ENCODE measurements at regions of chr7 and their contacts with region 1.

Region 1: GRCh38 chr7:38398725-38399321 is 125.4 kb upstream of the TARP start:
- DNase-seq: peak in 1 of 2 experiments; percentile 59
- H3K4me3 ChIP-seq: no peak overlapping the region
- H3K27ac ChIP-seq: no peak overlapping the region
- H3K4me1 ChIP-seq: no peaks in the 10 kb centered on the region
- H3K27me3 ChIP-seq: no peaks in the 10 kb centered on the region
- CTCF ChIP-seq: peak; percentile 65 to 83 (median 77)
- EP300 ChIP-seq: no peak
- POLR2A ChIP-seq: no peak
- RAD21 ChIP-seq: peak; percentile 74 to 77

Region 2: GRCh38 chr7:38296059-38296857 is 102.6 kb before region 1 on chr7:
- CTCF ChIA-PET with region 1: no interaction called
- POLR2A ChIA-PET with region 1: no interaction called
- DNase-seq: no peak
- H3K4me3 ChIP-seq: no peak overlapping the region
- H3K27ac ChIP-seq: no peak overlapping the region
- H3K4me1 ChIP-seq: no peaks in the 10 kb centered on the region
- H3K27me3 ChIP-seq: no peaks in the 10 kb centered on the region
- CTCF ChIP-seq: no peak
- EP300 ChIP-seq: no peak
- POLR2A ChIP-seq: no peak
- RAD21 ChIP-seq: no peak

Region 3: DNA sequence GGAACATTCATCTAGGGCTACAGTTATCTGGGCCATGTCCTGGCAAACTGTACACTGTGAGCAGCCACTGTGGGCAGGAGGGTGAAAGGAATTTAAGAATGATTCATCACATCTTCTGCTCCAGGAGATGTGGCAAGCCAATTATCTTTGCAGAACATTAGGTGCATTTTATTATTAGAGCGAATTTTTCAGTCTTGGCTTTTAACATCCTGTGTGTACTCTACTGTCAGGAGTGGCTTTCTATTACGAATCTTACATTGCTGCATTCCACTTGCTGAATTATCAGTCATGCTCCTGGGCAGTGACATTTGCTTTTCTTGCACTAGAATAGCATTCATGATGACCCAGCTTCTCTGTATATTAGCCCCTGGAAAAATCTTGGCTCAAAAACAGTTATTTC is 16.1 kb before region 1 on chr7:
- CTCF ChIA-PET with region 1: interaction called, 13 read pairs
- POLR2A ChIA-PET with region 1: no interaction called
- DNase-seq: no peak
- H3K4me3 ChIP-seq: no peak overlapping the region
- H3K27ac ChIP-seq: no peak overlapping the region
- H3K4me1 ChIP-seq: no peaks in the 10 kb centered on the region
- H3K27me3 ChIP-seq: no peaks in the 10 kb centered on the region
- CTCF ChIP-seq: no peak
- EP300 ChIP-seq: no peak
- POLR2A ChIP-seq: no peak
- RAD21 ChIP-seq: no peak

Region 4: DNA sequence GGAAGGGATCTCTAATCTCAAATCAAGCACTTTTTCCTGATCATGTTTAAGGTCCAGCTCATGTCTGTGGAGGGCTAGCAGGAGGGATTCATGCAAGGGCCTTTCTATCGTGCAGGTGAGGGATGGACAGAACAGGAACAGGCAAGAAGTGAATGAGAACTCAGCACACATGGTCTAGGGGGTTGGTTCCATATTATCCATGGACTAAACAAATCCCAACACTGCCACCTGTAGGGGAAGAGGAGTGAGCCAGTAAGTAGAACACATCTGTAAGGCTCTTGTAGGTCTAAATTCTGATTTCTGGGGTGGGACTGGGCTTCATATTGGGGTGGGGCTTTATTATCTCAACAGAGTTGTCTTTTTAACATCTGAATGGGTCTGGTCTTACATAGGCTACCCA is 12.6 kb after region 1 on chr7:
- CTCF ChIA-PET with region 1: interaction called, 24 read pairs
- POLR2A ChIA-PET with region 1: interaction called, 4 read pairs
- DNase-seq: no peak
- H3K4me3 ChIP-seq: no peak overlapping the region
- H3K27ac ChIP-seq: no peak overlapping the region
- H3K4me1 ChIP-seq: peaks cover 0 to 2% (median 0%) of the 10 kb centered on the region in 4 experiments; a peak in 1 of 7 replicates
- H3K27me3 ChIP-seq: no peaks in the 10 kb centered on the region
- CTCF ChIP-seq: peak in 2 of 3 experiments; percentile 55 to 68; a peak in 2 of 4 replicates
- EP300 ChIP-seq: no peak
- POLR2A ChIP-seq: no peak
- RAD21 ChIP-seq: peak; percentile 29 to 35

Region 5: DNA sequence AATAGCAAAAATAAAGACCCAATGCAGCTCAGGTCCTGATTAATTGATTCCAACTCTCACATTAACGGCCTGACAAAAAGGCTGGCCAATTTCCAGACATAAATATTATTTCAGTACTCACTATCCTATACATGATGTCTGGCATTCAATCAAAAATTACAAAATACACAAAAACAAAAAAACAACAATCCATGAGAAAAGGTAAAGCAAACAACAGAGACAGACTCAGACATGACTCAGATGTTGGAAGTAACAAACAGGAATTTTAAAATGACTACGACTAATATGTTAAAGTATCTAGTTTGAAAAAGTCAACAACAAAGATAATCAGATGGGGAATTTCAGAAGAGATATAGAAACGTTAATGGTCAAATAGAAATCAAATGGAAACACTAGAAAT is 79.6 kb after region 1 on chr7:
- CTCF ChIA-PET with region 1: no interaction called
- POLR2A ChIA-PET with region 1: no interaction called
- DNase-seq: no peak
- H3K4me3 ChIP-seq: no peak overlapping the region
- H3K27ac ChIP-seq: no peak overlapping the region
- H3K4me1 ChIP-seq: no peaks in the 10 kb centered on the region
- H3K27me3 ChIP-seq: no peaks in the 10 kb centered on the region
- CTCF ChIP-seq: no peak
- EP300 ChIP-seq: no peak
- POLR2A ChIP-seq: no peak
- RAD21 ChIP-seq: no peak

Measured in H1 (cell line).